Right ventricle myocardium superior (tissue), 1 donor: ENCODE measurements at regions of chr5 and their contacts with region 1.

Region 1: GRCh38 chr5:4879693-4880303 is 260.3 kb upstream of the ADAMTS16 start:
- DNase-seq: peak; percentile 82
- ATAC-seq: peak; percentile 87

Region 2: GRCh38 chr5:5419294-5420210 is 539.8 kb after region 1 on chr5:
- intact Hi-C with region 1: loop called (anchors 5 kb)
- DNase-seq: no peak
- ATAC-seq: no peak